ENCODE measurements at regions of chr16 and their contacts with region 1.

Region 1: GRCh38 chr16:20849587-20850390 is 43.5 kb downstream of the REXO5 start:
- DNase-seq: peak; percentile 78
- H3K4me3 Mint-ChIP-seq: no peak overlapping the region
- H3K27ac Mint-ChIP-seq: no peak overlapping the region
- H3K4me1 Mint-ChIP-seq: peaks cover 8% of the 10 kb centered on the region
- H3K27me3 Mint-ChIP-seq: no peaks in the 10 kb centered on the region

Region 2: DNA sequence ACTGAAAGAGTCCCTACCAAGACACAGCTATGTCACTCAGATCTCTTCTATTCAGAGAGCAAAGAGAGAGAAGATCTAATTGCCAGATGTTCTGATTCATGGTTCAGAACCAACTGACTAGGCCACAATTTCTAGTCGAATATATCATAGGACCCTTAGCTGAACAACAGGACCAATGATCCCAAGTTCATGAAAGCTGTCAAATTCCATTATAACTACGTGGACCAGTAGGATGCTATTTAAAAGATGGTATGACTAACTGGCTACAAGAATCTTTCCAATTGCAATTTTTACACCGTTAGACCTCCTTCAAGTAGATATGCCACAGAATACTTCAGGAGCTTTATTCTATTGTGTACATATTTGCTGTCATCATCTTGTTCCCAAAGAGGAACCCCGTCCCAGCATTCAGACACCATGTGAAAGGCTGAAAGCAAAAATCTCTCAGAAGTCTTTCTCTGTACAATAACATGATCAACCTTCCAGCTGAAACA is 24.3 kb after region 1 on chr16:
- CTCF ChIA-PET with region 1: interaction called, 13 read pairs
- intact Hi-C with region 1: no loop called
- DNase-seq: peak; percentile 30
- H3K4me3 Mint-ChIP-seq: no peak overlapping the region
- H3K27ac Mint-ChIP-seq: peak overlapping the region; percentile 78
- H3K4me1 Mint-ChIP-seq: peaks cover 53% of the 10 kb centered on the region
- H3K27me3 Mint-ChIP-seq: no peaks in the 10 kb centered on the region

Region 3: GRCh38 chr16:20944861-20945574 is 95.2 kb after region 1 on chr16:
- CTCF ChIA-PET with region 1: interaction called, 6 read pairs
- intact Hi-C with region 1: loop called (anchors 1 kb)
- DNase-seq: peak; percentile 58
- H3K4me3 Mint-ChIP-seq: no peak overlapping the region
- H3K27ac Mint-ChIP-seq: no peak overlapping the region
- H3K4me1 Mint-ChIP-seq: peaks cover 19% of the 10 kb centered on the region
- H3K27me3 Mint-ChIP-seq: no peaks in the 10 kb centered on the region

Region 4: GRCh38 chr16:21083729-21084268 is 234.0 kb after region 1 on chr16:
- CTCF ChIA-PET with region 1: interaction called, 24 read pairs
- intact Hi-C with region 1: loop called (anchors 1 kb)
- DNase-seq: peak; percentile 68
- H3K4me3 Mint-ChIP-seq: no peak overlapping the region
- H3K27ac Mint-ChIP-seq: no peak overlapping the region
- H3K4me1 Mint-ChIP-seq: no peaks in the 10 kb centered on the region
- H3K27me3 Mint-ChIP-seq: peaks cover 6% of the 10 kb centered on the region

Region 5: GRCh38 chr16:21158208-21159110 is 308.7 kb after region 1 on chr16 and contains the start of gene LDAF1:
- CTCF ChIA-PET with region 1: interaction called, 7 read pairs
- intact Hi-C with region 1: loop called (anchors 10 kb)
- DNase-seq: peak; percentile 86
- H3K4me3 Mint-ChIP-seq: peak within 1 kb of the TSS; percentile 88
- H3K27ac Mint-ChIP-seq: no peak within 1 kb of the TSS
- H3K4me1 Mint-ChIP-seq: peaks cover 26% of the 10 kb centered on the region
- H3K27me3 Mint-ChIP-seq: no peaks in the 10 kb centered on the region
- total RNA-seq, gene LDAF1: 13.3 to 14.5 TPM

Measured in activated naive CD4-positive, alpha-beta T cell treated with anti-CD3 and anti-CD28 coated beads for 36 hours (primary cell).